MCF 10A (cell line): ENCODE measurements at regions of chr2 and their contacts with region 1.

Region 1: GRCh38 chr2:164717000-164717803 is 95.9 kb upstream of the GRB14 start:
- DNase-seq: peak; percentile 56
- H3K4me3 Mint-ChIP-seq: no peak overlapping the region
- H3K27ac Mint-ChIP-seq: no peak overlapping the region
- H3K4me1 Mint-ChIP-seq: peaks cover 15% of the 10 kb centered on the region
- H3K27me3 Mint-ChIP-seq: no peaks in the 10 kb centered on the region
- CTCF ChIP-seq: peak; percentile 53

Region 2: GRCh38 chr2:164706522-164706921 is 10.7 kb before region 1 on chr2:
- CTCF ChIA-PET with region 1: interaction called, 19 read pairs
- POLR2A ChIA-PET with region 1: interaction called, 5 read pairs
- intact Hi-C with region 1: no loop called
- DNase-seq: peak; percentile 18
- H3K4me3 Mint-ChIP-seq: no peak overlapping the region
- H3K27ac Mint-ChIP-seq: no peak overlapping the region
- H3K4me1 Mint-ChIP-seq: peaks cover 5% of the 10 kb centered on the region
- H3K27me3 Mint-ChIP-seq: no peaks in the 10 kb centered on the region
- CTCF ChIP-seq: no peak